Heart left ventricle (tissue), 16 donors: ENCODE measurements at regions of chr1 and their contacts with region 1.

Region 1: DNA sequence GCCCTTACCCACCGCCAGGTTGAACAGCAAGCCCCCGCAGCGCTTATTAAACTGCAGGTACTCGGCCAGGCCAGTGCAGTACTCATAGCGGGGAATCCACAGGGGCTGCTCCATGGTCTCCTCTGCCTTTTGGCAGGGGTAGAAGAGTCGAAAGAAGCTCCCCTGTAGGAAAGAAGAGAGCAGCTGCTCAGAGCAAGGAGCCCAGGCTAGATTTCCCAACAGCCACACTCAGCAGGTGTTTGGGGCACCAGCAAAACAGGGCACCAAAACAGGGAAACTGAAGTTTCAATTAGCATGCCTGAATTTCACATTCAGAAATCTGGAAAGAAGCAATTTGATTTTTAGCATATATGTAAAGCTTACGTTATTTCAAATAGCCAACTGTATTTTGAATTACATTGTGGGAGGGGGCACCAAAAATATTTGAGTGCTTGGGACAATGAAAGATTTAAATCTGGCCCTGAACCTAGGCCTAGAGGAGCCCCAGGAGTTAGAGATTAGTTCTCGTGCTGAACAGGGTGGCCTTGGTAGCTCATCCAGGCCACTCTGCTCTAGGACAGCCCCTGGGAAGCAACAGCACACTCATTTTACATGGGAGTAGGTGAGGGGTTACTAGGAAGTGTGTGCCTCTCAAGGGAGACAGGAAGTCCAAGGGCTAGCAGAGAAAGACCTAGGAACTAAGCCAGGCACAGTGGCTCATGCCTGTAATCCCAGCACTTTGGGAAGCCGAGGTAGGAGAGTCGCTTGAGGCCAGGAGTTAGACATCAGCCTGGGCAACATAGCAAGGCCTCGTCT is 8.2 kb downstream of the PAFAH2 start:
- DNase-seq: no peak
- ATAC-seq: peak in 2 of 4 donors; percentile 30 to 47
- H3K4me3 ChIP-seq: peak overlapping the region in 3 of 12 donors; percentile 7 to 51 (median 36)
- H3K27ac ChIP-seq: peak overlapping the region in 3 of 12 donors; percentile 21 to 67 (median 54)
- H3K4me1 ChIP-seq: peaks cover 0 to 47% (median 24%) of the 10 kb centered on the region in 12 donors
- H3K27me3 ChIP-seq: no peaks in the 10 kb centered on the region
- CTCF ChIP-seq: no peak
- POLR2A ChIP-seq: no peak

Region 2: GRCh38 chr1:25922056-25922969 is 67.3 kb before region 1 on chr1:
- intact Hi-C with region 1: loop called in 1 of 10 experiments (anchors 5 kb)
- DNase-seq: peak; percentile 44 to 78 (median 52)
- ATAC-seq: peak in 3 of 4 donors; percentile 64 to 82 (median 71)
- H3K4me3 ChIP-seq: peak overlapping the region; percentile 32 to 75 (median 61)
- H3K27ac ChIP-seq: peak overlapping the region; percentile 35 to 93 (median 68)
- H3K4me1 ChIP-seq: peaks cover 0 to 39% (median 10%) of the 10 kb centered on the region in 12 donors
- H3K27me3 ChIP-seq: no peaks in the 10 kb centered on the region
- CTCF ChIP-seq: peak in 1 of 12 donors; percentile 2
- POLR2A ChIP-seq: no peak

Region 3: DNA sequence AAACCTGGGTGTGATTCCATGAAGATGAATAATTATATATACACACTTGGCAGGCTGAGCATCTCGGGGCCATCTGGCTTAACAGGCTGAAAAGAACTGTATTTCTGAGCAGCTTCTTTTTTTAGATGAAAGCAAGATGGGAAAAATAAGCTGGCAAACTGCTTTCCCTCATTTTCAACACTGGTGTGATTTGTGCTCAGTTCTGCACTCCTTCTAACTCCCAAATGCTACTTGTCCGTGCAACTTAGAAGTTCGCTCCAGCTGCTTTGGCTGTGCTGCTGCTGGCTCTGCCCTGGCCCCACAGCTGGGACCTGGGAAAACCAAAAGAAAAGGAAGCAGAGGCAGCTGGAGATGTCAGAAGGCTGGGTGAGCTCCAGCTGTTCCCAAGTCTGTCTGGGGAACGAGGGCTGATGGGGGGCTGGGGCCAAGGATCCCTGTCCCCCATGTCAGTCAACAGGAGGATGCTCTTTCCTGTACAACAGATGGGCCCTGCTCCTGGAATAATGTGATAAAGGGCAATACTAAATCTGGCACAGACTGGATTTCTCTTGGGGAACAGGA is 36.7 kb before region 1 on chr1:
- intact Hi-C with region 1: loop called in 1 of 10 experiments (anchors 1 kb)
- DNase-seq: peak; percentile 58 to 74 (median 66)
- ATAC-seq: peak; percentile 79 to 91 (median 90)
- H3K4me3 ChIP-seq: no peak overlapping the region
- H3K27ac ChIP-seq: no peak overlapping the region
- H3K4me1 ChIP-seq: peaks cover 0 to 7% (median 0%) of the 10 kb centered on the region in 12 donors
- H3K27me3 ChIP-seq: no peaks in the 10 kb centered on the region
- CTCF ChIP-seq: no peak
- POLR2A ChIP-seq: no peak

Region 4: GRCh38 chr1:26468911-26469310 is 479.3 kb after region 1 on chr1:
- intact Hi-C with region 1: no loop called
- DNase-seq: no peak
- ATAC-seq: no peak
- H3K4me3 ChIP-seq: no peak overlapping the region
- H3K27ac ChIP-seq: no peak overlapping the region
- H3K4me1 ChIP-seq: peaks cover 0 to 38% (median 25%) of the 10 kb centered on the region in 12 donors
- H3K27me3 ChIP-seq: no peaks in the 10 kb centered on the region
- CTCF ChIP-seq: no peak
- POLR2A ChIP-seq: no peak